ENCODE measurements at regions of chr6 and their contacts with region 1.

Region 1: DNA sequence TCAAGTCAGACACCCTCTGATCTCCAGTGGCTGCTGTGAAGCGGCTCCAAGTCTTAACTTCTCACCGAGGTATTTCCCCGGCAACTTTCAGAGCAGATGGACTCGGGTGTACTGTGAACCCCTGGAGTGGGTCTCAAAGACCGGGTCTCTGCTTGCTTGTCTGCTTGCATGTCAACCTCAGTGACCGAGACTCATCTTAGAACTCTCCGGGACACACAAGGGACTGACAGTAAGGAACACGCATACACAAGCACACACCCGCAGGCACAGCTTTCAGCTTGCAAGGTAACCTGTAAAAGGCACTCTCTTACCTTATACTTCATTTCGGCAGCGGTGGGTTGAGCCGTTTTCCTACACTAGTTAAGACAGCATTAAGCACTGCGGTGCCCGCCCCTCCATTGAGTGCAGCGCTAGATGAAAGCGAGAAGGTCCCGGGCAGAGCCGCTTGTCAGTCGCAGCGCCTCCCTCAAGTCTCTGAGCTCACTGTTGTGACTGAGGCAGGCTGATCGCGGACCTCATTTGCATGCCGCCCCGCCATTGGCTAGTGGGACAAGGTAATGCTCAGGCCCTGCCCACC is at the start of gene NEDD9:
- DNase-seq: peak; percentile 93 to 97
- ATAC-seq: peak; percentile 90 to 98 (median 94)
- H3K4me3 ChIP-seq: peak within 1 kb of the TSS; percentile 59
- H3K4me3 Mint-ChIP-seq: peak within 1 kb of the TSS; percentile 94
- H3K27ac ChIP-seq: peak within 1 kb of the TSS; percentile 95
- H3K27ac Mint-ChIP-seq: peak within 1 kb of the TSS; percentile 96 to 98
- H3K4me1 ChIP-seq: peaks cover 40% of the 10 kb centered on the region
- H3K4me1 Mint-ChIP-seq: peaks cover 82 to 88% of the 10 kb centered on the region in 2 donors
- H3K27me3 ChIP-seq: no peaks in the 10 kb centered on the region
- H3K27me3 Mint-ChIP-seq: no peaks in the 10 kb centered on the region
- CTCF ChIP-seq: no peak
- total RNA-seq, gene NEDD9: 106 to 110 (median 107) TPM

Region 2: GRCh38 chr6:10694302-10695085 is 537.8 kb before region 1 on chr6 and contains the starts of genes C6orf52 and PAK1IP1:
- intact Hi-C with region 1: loop called (anchors 10 kb)
- DNase-seq: peak; percentile 91 to 96
- ATAC-seq: peak; percentile 94 to 98 (median 94)
- H3K4me3 ChIP-seq: peak within 1 kb of the TSS; percentile 70
- H3K4me3 Mint-ChIP-seq: peak within 1 kb of the TSS; percentile 99
- H3K27ac ChIP-seq: peak within 1 kb of the TSS; percentile 94
- H3K27ac Mint-ChIP-seq: peak within 1 kb of the TSS; percentile 100
- H3K4me1 ChIP-seq: peaks cover 11% of the 10 kb centered on the region
- H3K4me1 Mint-ChIP-seq: peaks cover 25 to 26% of the 10 kb centered on the region in 2 donors
- H3K27me3 ChIP-seq: no peaks in the 10 kb centered on the region
- H3K27me3 Mint-ChIP-seq: no peaks in the 10 kb centered on the region
- CTCF ChIP-seq: no peak
- total RNA-seq, gene C6orf52: 0.58 to 0.91 TPM in 2 of 3 donors, not detected in the other
- total RNA-seq, gene PAK1IP1: 3.6 to 5.2 (median 4.6) TPM

Region 3: DNA sequence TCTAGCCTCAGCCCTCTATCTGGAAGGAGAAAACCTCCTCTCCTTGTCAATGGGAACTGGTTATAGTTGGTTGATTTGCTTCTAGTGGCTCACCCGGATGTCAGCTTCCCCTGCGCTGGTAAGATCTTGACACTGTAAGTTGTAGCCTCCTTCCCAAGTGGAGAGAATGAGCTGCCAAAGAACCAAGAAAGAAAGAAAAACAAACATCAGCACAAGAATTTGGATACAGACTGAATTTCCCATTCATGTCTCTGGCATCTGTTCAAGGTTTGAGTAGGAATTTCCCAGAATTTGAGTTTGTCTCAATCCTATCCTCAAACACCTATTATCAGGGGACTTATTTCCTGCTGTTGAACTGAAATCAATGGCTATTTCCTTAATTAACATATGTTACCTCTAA is 232.3 kb before region 1 on chr6:
- intact Hi-C with region 1: no loop called
- DNase-seq: no peak
- ATAC-seq: no peak
- H3K4me3 ChIP-seq: no peak overlapping the region
- H3K4me3 Mint-ChIP-seq: no peak overlapping the region
- H3K27ac ChIP-seq: no peak overlapping the region
- H3K27ac Mint-ChIP-seq: no peak overlapping the region
- H3K4me1 ChIP-seq: no peaks in the 10 kb centered on the region
- H3K4me1 Mint-ChIP-seq: no peaks in the 10 kb centered on the region
- H3K27me3 ChIP-seq: no peaks in the 10 kb centered on the region
- H3K27me3 Mint-ChIP-seq: peaks cover 14 to 25% of the 10 kb centered on the region in 2 donors
- CTCF ChIP-seq: no peak

Region 4: GRCh38 chr6:11172501-11173332 is 59.6 kb before region 1 on chr6:
- intact Hi-C with region 1: loop called (anchors 2 kb)
- DNase-seq: peak; percentile 76 to 86
- ATAC-seq: peak; percentile 75 to 89 (median 83)
- H3K4me3 ChIP-seq: no peak overlapping the region
- H3K4me3 Mint-ChIP-seq: peak overlapping the region; percentile 80
- H3K27ac ChIP-seq: no peak overlapping the region
- H3K27ac Mint-ChIP-seq: peak overlapping the region in 1 of 2 donors; percentile 75
- H3K4me1 ChIP-seq: peaks cover 6% of the 10 kb centered on the region
- H3K4me1 Mint-ChIP-seq: peaks cover 12 to 19% of the 10 kb centered on the region in 2 donors
- H3K27me3 ChIP-seq: no peaks in the 10 kb centered on the region
- H3K27me3 Mint-ChIP-seq: no peaks in the 10 kb centered on the region
- CTCF ChIP-seq: peak; percentile 89

Region 5: GRCh38 chr6:11258260-11259237 is 26.3 kb after region 1 on chr6:
- intact Hi-C with region 1: loop called (anchors 1 kb)
- DNase-seq: peak; percentile 40 to 68
- ATAC-seq: peak; percentile 71 to 87 (median 85)
- H3K4me3 ChIP-seq: no peak overlapping the region
- H3K4me3 Mint-ChIP-seq: peak overlapping the region; percentile 69
- H3K27ac ChIP-seq: peak overlapping the region; percentile 74
- H3K27ac Mint-ChIP-seq: peak overlapping the region; percentile 85 to 93
- H3K4me1 ChIP-seq: peaks cover 56% of the 10 kb centered on the region
- H3K4me1 Mint-ChIP-seq: peaks cover 87 to 92% of the 10 kb centered on the region in 2 donors
- H3K27me3 ChIP-seq: no peaks in the 10 kb centered on the region
- H3K27me3 Mint-ChIP-seq: no peaks in the 10 kb centered on the region
- CTCF ChIP-seq: no peak

Region 6: DNA sequence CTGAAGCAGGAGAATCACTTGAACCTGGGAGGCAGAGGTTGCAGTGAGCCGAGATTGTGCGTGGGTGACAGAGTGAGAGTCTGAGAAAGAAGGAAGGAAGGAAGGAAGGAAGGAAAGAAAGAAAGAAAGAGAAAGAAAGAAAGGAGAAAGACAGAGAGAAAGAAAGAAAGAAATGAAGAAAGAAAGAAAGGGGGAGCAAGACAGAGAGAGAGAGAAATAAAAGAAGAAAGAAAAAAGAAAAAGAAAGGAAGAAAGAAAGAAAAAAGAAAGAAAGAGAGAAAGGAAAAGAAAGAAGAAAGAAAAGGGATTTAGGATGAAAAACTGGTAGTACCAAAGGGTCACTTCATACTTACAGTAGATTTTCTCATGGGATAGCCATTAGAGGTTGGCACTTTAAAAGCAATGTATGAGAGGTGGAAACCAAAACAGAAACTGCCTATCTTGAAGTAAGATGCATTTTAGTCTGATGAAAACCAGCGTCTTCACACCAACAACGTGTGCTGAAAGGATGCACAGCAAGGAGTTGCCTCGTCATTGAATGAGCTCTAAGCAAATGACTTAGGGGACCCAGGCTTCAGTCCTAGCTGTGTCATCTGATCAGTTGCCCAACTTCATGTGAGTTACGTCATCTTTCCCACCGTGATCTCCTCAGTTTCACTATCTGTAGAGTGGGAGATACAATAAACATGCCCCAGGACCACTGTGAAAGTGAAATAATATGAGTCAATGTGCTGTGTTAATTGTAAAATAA is 134.1 kb after region 1 on chr6:
- intact Hi-C with region 1: loop called (anchors 1 kb)
- DNase-seq: peak; percentile 50 to 81
- ATAC-seq: peak; percentile 95 to 97 (median 97)
- H3K4me3 ChIP-seq: no peak overlapping the region
- H3K4me3 Mint-ChIP-seq: peak overlapping the region; percentile 73
- H3K27ac ChIP-seq: peak overlapping the region; percentile 55
- H3K27ac Mint-ChIP-seq: peak overlapping the region; percentile 86 to 96
- H3K4me1 ChIP-seq: peaks cover 20% of the 10 kb centered on the region
- H3K4me1 Mint-ChIP-seq: peaks cover 76 to 82% of the 10 kb centered on the region in 2 donors
- H3K27me3 ChIP-seq: no peaks in the 10 kb centered on the region
- H3K27me3 Mint-ChIP-seq: no peaks in the 10 kb centered on the region
- CTCF ChIP-seq: no peak

Region 7: GRCh38 chr6:11556309-11556708 is 324.0 kb after region 1 on chr6:
- intact Hi-C with region 1: no loop called
- DNase-seq: no peak
- ATAC-seq: no peak
- H3K4me3 ChIP-seq: no peak overlapping the region
- H3K4me3 Mint-ChIP-seq: no peak overlapping the region
- H3K27ac ChIP-seq: no peak overlapping the region
- H3K27ac Mint-ChIP-seq: no peak overlapping the region
- H3K4me1 ChIP-seq: no peaks in the 10 kb centered on the region
- H3K4me1 Mint-ChIP-seq: peaks cover 13 to 23% of the 10 kb centered on the region in 2 donors
- H3K27me3 ChIP-seq: no peaks in the 10 kb centered on the region
- H3K27me3 Mint-ChIP-seq: no peaks in the 10 kb centered on the region
- CTCF ChIP-seq: no peak